ENCODE measurements at regions of chr12 and their contacts with region 1.

Region 1: DNA sequence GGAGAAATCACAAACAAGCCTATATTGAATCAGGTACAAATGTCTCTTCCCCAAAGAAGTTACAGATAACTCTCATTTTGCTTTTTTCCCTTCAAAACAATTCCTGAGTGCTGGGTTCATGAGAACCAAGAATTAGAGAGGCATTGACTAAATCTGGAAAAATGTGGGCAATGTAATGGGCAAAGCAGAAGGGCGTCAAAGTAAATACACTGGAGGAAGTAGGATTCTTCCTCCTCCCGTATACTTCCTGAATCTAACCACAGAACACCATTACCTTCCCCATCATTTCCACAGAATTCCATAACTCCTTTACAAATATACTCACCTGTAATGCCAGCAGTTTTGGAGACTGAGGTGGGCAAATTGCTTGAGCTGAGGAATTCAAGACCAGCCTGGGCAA is 3.0 kb upstream of the RBMS2 start:
- DNase-seq: no peak
- ATAC-seq: no peak
- H3K4me3 ChIP-seq: no peak overlapping the region
- H3K27ac ChIP-seq: no peak overlapping the region
- H3K4me1 ChIP-seq: peaks cover 0 to 5% (median 0%) of the 10 kb centered on the region in 3 donors
- H3K27me3 ChIP-seq: no peaks in the 10 kb centered on the region
- CTCF ChIP-seq: no peak

Region 2: GRCh38 chr12:55607821-55608594 is 910.6 kb before region 1 on chr12:
- intact Hi-C with region 1: no loop called
- DNase-seq: no peak
- ATAC-seq: no peak
- H3K4me3 ChIP-seq: no peak overlapping the region
- H3K27ac ChIP-seq: no peak overlapping the region
- H3K4me1 ChIP-seq: no peaks in the 10 kb centered on the region
- H3K27me3 ChIP-seq: no peaks in the 10 kb centered on the region
- CTCF ChIP-seq: no peak

Region 3: DNA sequence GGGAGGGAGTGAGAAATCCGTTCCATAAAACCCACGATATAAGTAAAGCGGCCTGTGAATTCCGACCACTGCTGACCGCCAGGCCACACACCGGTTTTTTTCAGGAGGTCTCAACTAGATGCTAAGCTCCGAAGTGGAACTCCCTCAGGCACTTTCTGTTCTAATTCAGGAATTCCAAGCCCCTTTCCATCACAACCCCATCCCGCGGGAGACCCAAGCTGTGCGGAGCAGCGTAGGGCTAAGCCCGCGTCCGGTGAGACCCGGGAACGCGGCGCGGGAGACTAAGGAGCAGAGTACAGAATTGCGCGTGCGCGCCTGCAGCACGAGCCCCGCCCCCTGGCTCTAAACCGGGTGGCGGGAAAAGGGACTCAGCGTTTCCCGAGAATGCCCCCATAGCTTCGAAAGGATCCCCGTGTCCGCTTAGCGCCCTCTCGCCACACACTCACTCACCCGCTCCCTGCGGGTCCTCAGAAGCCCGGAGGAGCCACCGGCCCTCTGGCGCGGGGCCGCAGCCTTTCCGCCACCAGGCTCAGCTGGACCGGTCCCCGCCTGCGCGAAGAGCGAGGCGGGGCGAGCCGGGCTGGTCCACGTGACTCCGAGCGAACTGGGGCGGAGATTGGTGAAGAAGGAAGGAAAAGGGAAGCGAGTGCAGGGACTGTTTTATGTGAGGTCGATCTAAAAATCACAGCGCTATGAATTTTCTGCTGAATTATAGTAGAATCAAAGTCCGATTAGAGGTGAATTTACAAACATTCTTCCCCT is 69.5 kb before region 1 on chr12 and contains the start of gene TIMELESS:
- intact Hi-C with region 1: no loop called
- DNase-seq: peak; percentile 85 to 93 (median 88)
- ATAC-seq: peak; percentile 98 to 99 (median 99)
- H3K4me3 ChIP-seq: peak within 1 kb of the TSS; percentile 47 to 76 (median 59)
- H3K27ac ChIP-seq: peak within 1 kb of the TSS; percentile 47 to 87 (median 78)
- H3K4me1 ChIP-seq: peaks cover 0 to 5% (median 0%) of the 10 kb centered on the region in 3 donors
- H3K27me3 ChIP-seq: no peaks in the 10 kb centered on the region
- CTCF ChIP-seq: no peak
- total RNA-seq, gene TIMELESS: 3.7 to 5.8 (median 4.5) TPM

Region 4: GRCh38 chr12:56476972-56477432 is 41.6 kb before region 1 on chr12:
- intact Hi-C with region 1: no loop called
- DNase-seq: peak; percentile 72 to 97 (median 94)
- ATAC-seq: peak; percentile 91 to 97 (median 96)
- H3K4me3 ChIP-seq: no peak overlapping the region
- H3K27ac ChIP-seq: peak overlapping the region; percentile 76 to 85 (median 78)
- H3K4me1 ChIP-seq: peaks cover 12 to 21% (median 16%) of the 10 kb centered on the region in 3 donors
- H3K27me3 ChIP-seq: no peaks in the 10 kb centered on the region
- CTCF ChIP-seq: no peak

Region 5: GRCh38 chr12:56571126-56571525 is 52.6 kb after region 1 on chr12:
- intact Hi-C with region 1: loop called in 2 of 3 experiments (anchors 2 to 5 kb)
- DNase-seq: no peak
- ATAC-seq: peak in 1 of 4 donors; percentile 15
- H3K4me3 ChIP-seq: no peak overlapping the region
- H3K27ac ChIP-seq: no peak overlapping the region
- H3K4me1 ChIP-seq: no peaks in the 10 kb centered on the region
- H3K27me3 ChIP-seq: no peaks in the 10 kb centered on the region
- CTCF ChIP-seq: no peak

Measured in pancreas (tissue), 10 donors.